ENCODE measurements at regions of chr19 and their contacts with region 1.

Region 1: DNA sequence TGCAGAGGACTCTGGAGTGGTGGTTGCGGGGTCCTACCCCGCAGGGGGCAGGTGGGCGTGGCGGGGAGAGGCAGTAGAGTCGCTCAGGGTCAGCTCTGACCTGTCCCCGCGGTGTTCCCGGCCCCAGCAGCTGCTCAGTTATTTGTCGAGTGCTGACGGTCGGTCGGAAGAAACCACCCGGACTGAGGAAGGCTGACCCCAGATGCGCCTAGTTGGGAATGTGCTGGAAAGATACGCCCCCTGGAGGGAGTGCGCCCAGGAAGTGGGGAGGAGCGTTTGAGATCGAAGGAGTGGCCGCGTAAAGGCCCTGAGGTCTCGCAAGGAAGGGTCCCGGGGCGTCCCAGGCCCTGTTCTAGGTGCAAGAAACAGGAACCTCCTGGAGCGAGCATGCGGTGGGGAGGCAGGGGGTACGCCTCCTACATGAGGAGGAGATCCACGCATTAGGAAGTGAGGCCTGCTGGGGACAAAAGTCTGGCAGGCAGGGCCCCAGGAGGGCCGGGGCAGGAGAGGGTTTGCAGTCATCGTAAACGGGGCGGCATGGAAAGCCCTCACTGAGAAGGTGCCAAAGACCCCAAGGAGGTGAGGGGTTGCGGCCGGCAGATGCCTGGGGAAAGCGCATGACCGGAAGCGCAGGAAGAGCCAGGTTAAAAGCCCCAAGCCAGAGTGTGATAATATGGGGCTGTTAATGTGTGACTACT is 9.2 kb downstream of the CCDC8 start:
- DNase-seq: no peak
- H3K4me3 ChIP-seq: no peak overlapping the region
- H3K27ac ChIP-seq: no peak overlapping the region
- H3K4me1 ChIP-seq: no peaks in the 10 kb centered on the region
- H3K27me3 ChIP-seq: peaks cover 47% of the 10 kb centered on the region
- CTCF ChIP-seq: no peak

Region 2: DNA sequence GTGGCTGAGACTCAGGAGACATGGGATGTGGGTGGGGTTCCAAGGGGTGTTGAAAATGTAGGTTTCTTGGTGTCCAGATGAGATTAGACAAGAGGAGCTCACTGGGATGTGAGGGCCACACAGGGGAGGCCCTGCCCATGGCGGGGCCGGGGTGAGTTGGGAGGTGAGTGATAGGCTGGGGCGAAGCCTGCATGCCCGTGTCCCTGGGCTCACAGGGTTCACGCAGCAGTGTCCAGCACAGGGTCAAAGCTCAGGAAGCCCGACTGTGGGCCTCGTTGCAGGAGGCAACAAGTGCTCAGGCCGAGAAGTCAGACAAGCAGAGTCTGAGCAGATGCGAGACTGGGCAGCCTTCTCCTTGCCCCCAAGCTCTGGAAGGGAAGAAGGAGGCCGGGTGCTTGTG is 18.1 kb before region 1 on chr19:
- CTCF ChIA-PET with region 1: no interaction called
- POLR2A ChIA-PET with region 1: no interaction called
- intact Hi-C with region 1: loop called (anchors 1 kb)
- DNase-seq: no peak
- H3K4me3 ChIP-seq: no peak overlapping the region
- H3K27ac ChIP-seq: no peak overlapping the region
- H3K4me1 ChIP-seq: no peaks in the 10 kb centered on the region
- H3K27me3 ChIP-seq: no peaks in the 10 kb centered on the region
- CTCF ChIP-seq: no peak

Region 3: GRCh38 chr19:46520616-46521015 is 116.4 kb after region 1 on chr19:
- CTCF ChIA-PET with region 1: interaction called, 21 read pairs
- POLR2A ChIA-PET with region 1: no interaction called
- intact Hi-C with region 1: no loop called
- DNase-seq: no peak
- H3K4me3 ChIP-seq: no peak overlapping the region
- H3K27ac ChIP-seq: no peak overlapping the region
- H3K4me1 ChIP-seq: no peaks in the 10 kb centered on the region
- H3K27me3 ChIP-seq: no peaks in the 10 kb centered on the region; the same call in 1 of the 2 replicates
- CTCF ChIP-seq: no peak

Measured in PC-9 (cell line).